Ovary (tissue), 10 donors: ENCODE measurements at regions of chr7 and their contacts with region 1.

Region 1: DNA sequence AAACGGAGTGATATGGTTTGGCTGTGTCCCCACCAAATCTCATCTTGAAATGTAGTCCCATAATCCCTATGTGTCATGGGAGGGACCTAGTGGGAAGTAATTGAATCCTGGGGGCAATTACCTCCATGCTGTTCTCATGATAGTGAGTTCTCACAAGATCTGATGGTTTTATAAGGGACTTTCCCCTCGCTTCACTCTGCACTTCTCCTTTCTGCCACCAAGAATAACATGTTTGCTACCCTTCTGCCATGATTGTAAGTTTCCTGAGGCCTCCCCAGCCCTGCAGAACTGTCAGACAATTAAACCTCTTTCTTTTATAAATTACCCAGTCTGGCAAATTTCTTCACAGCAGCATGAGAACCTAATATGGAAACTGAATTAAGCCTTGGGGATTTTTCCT is 19.1 kb downstream of the FAM3C start:
- DNase-seq: no peak
- H3K4me3 ChIP-seq: no peak overlapping the region
- H3K27ac ChIP-seq: no peak overlapping the region
- H3K4me1 ChIP-seq: no peaks in the 10 kb centered on the region
- H3K27me3 ChIP-seq: no peaks in the 10 kb centered on the region
- CTCF ChIP-seq: no peak
- EP300 ChIP-seq: no peak
- POLR2A ChIP-seq: no peak

Region 2: DNA sequence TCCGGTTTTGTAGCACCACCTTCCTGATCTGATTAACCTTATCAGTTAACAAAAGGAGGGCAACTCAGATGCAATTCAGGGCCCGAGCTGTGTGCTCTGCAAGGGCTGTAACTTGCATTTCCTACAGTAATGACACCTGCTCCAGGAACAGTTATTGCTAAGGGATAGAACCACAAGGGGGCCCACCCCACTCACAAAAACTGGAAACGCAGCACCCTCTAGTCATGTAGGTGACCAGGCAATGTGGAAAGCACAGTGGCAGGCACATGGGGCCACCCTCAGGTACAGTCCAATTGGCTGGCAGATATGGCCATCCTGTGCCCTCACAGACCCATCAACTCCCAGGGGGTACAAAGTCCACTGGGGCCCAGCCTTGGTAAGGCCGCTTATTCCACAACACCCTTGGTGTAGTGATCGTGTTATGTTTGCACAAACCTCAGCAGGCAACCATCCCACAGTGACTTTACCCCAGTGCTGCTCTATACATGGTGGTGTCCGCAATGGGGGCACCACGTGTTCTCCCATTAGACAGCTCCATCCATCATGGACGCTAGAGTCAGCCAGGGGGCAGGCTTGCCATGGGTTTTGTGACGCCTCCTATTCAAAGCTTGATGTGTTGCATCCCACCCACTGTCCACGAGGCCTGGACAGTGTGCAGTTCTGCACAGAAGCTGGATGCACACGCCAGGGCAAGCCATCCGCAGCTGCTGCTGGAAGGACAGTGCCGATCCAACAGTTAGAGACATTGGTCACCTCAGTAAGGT is 1312.5 kb after region 1 on chr7:
- intact Hi-C with region 1: loop called in 1 of 4 experiments (anchors 5 kb)
- DNase-seq: no peak
- H3K4me3 ChIP-seq: no peak overlapping the region
- H3K27ac ChIP-seq: no peak overlapping the region
- H3K4me1 ChIP-seq: no peaks in the 10 kb centered on the region
- H3K27me3 ChIP-seq: no peaks in the 10 kb centered on the region
- CTCF ChIP-seq: no peak
- EP300 ChIP-seq: no peak
- POLR2A ChIP-seq: no peak